ENCODE measurements at regions of chrX and their contacts with region 1.

Region 1: DNA sequence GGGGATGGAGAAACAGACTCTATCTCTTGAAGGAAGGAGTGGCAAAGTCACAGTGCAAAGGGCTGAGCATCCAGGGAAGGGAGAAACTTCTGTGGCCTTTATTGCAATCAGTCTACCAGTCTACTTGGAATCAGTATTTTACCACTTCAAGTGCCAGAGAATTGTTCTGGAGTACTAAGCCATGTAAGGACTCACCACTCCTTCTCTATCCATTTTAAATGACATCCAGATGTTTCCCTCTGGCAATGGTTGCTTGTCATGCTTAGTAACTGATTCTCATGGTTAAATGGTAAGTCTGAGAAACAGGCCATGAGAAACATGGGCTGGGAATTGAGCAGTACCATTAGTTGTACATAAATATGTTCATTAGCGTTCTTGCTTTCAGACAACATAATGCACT is 21.1 kb upstream of the SMIM10 start:
- DNase-seq: no peak

Region 2: GRCh38 chrX:134782796-134783195 is 186.9 kb before region 1 on chrX:
- in situ Hi-C with region 1: no loop called
- DNase-seq: peak; percentile 10

Region 3: GRCh38 chrX:135003876-135004623 is 34.3 kb after region 1 on chrX:
- in situ Hi-C with region 1: loop called (anchors 5 kb)
- DNase-seq: peak; percentile 91

Region 4: DNA sequence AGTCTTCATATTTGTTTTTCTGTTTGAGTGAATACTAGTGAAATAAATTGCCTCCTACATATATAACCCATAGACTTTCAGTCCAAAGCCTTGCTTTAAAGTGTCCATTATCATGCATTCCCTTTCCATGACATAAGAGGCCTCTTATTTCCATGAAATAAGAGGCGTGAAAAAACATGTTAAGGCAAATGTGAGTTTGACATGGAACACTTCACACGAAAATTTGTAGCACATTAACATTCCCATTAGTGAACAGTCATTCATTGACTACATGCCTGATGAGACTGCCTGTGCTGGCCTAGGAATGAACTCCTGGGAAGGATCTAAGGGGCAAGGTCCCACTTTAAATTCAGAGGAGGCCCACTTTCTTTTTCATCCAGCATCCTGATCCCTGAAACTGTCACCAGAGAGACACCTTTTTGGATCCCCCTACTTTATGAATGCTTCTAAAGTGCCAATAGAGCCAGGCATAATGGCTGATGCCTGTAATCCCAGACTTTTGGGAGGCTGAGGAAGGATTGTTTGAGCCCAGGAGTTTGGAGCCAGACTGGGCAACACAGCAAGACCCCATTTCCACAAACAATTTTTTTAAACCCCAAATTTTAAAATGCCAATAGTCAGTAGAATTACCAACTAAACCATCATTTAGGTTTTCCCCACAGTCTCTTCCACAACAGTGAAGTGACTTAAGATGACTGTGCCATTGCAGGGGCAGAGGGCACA is 46.0 kb after region 1 on chrX:
- in situ Hi-C with region 1: no loop called
- DNase-seq: no peak

Measured in G401 (cell line).